MCF 10A (cell line): ENCODE measurements at regions of chr1 and their contacts with region 1.

Region 1: GRCh38 chr1:167442124-167442848 is 76.0 kb downstream of the CD247 start:
- DNase-seq: peak; percentile 94
- H3K4me3 Mint-ChIP-seq: no peak overlapping the region
- H3K27ac Mint-ChIP-seq: no peak overlapping the region
- H3K4me1 Mint-ChIP-seq: peaks cover 6% of the 10 kb centered on the region
- H3K27me3 Mint-ChIP-seq: peaks cover 18% of the 10 kb centered on the region
- CTCF ChIP-seq: peak; percentile 98

Region 2: DNA sequence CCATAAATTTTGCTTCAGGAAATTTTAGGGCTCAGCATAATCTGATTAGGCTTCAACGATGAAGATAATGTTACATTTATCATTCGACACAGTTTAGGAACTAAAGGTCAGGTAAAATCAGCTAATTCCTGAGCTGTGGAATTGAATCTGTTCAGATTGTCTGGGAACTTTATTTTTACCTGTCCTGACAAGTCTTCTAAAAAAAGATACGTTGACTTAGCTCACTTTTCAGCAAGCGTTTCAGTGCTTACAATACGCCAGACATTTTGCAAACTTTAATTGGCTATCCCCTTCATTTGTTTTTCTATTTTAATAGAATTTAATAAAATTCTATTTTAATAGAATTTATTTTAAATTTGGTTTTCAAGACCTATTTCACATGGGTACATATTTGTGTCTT is 163.8 kb before region 1 on chr1:
- CTCF ChIA-PET with region 1: interaction called, 19 read pairs
- POLR2A ChIA-PET with region 1: no interaction called
- intact Hi-C with region 1: no loop called
- DNase-seq: no peak
- H3K4me3 Mint-ChIP-seq: no peak overlapping the region
- H3K27ac Mint-ChIP-seq: no peak overlapping the region
- H3K4me1 Mint-ChIP-seq: peaks cover 17% of the 10 kb centered on the region
- H3K27me3 Mint-ChIP-seq: no peaks in the 10 kb centered on the region
- CTCF ChIP-seq: no peak

Region 3: GRCh38 chr1:167401260-167401873 is 40.9 kb before region 1 on chr1:
- CTCF ChIA-PET with region 1: interaction called, 49 read pairs
- POLR2A ChIA-PET with region 1: interaction called, 3 read pairs
- intact Hi-C with region 1: loop called (anchors 1 kb)
- DNase-seq: peak; percentile 76
- H3K4me3 Mint-ChIP-seq: no peak overlapping the region
- H3K27ac Mint-ChIP-seq: peak overlapping the region; percentile 23
- H3K4me1 Mint-ChIP-seq: peaks cover 6% of the 10 kb centered on the region
- H3K27me3 Mint-ChIP-seq: no peaks in the 10 kb centered on the region
- CTCF ChIP-seq: peak; percentile 72

Region 4: DNA sequence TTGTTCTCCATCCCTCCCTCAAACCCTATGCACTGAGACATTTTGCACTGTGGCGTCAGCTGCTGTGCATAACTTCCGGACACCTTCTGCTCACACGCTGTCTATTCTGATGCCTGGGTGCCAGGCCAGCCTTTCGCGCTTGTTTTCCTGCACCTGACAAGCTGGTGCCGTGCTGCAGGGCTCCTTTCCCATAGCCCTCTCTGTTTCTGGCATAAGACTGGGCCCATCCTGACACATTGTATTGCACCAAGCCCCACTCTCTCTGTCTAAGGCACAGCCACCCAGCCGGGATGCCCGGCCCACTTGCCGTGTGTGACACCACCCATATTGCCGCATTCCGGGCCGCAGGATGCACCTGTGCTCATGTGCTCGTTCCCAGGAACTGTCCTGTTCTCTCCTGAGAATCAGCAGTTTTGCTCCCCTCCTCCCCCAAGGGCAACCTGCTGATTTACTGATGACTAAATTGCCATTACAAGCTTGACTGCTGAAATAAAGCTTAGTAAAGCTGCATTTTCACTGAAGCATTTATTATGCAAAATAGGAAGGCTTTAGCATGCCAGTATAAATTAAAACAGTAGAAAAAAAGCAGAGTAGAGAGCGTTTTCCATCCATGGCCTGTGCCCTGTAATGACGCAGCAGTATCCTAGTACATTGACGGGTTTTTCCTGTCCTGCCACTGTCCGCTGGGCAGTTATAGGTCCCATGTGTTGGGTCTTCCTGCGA is 12.0 kb before region 1 on chr1:
- CTCF ChIA-PET with region 1: interaction called, 105 read pairs
- POLR2A ChIA-PET with region 1: no interaction called
- intact Hi-C with region 1: no loop called
- DNase-seq: no peak
- H3K4me3 Mint-ChIP-seq: no peak overlapping the region
- H3K27ac Mint-ChIP-seq: no peak overlapping the region
- H3K4me1 Mint-ChIP-seq: no peaks in the 10 kb centered on the region
- H3K27me3 Mint-ChIP-seq: no peaks in the 10 kb centered on the region
- CTCF ChIP-seq: no peak

Region 5: DNA sequence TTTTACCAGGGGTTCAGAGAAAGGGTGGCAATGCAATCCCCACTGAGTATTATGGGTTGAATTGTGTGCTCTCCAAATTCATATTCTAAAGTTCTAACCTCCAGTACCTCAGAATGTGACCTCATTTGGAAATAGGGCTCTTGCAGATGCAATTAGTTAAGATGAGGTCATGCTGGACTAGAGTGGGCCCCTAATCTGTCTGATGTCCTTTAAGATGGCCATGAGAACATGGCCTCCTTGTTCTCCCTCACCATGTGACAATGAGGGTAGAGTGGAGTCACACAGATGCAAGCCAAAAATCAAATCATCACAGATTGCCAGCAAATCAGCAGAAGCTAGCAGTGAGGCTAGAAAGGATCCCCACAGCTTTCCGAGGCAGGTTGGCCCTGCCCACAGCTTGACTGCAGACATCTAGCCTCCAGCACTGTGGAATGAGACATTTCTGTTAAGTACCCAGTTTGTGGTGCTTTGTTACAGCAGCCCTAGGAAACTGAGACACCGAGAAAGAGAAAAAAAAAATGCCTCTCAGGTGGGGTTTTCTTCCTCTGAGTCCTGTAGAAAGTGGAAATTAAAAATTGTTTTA is 136.7 kb after region 1 on chr1:
- CTCF ChIA-PET with region 1: no interaction called
- POLR2A ChIA-PET with region 1: no interaction called
- intact Hi-C with region 1: no loop called
- DNase-seq: no peak
- H3K4me3 Mint-ChIP-seq: no peak overlapping the region
- H3K27ac Mint-ChIP-seq: no peak overlapping the region
- H3K4me1 Mint-ChIP-seq: peaks cover 7% of the 10 kb centered on the region
- H3K27me3 Mint-ChIP-seq: no peaks in the 10 kb centered on the region
- CTCF ChIP-seq: no peak

Region 6: DNA sequence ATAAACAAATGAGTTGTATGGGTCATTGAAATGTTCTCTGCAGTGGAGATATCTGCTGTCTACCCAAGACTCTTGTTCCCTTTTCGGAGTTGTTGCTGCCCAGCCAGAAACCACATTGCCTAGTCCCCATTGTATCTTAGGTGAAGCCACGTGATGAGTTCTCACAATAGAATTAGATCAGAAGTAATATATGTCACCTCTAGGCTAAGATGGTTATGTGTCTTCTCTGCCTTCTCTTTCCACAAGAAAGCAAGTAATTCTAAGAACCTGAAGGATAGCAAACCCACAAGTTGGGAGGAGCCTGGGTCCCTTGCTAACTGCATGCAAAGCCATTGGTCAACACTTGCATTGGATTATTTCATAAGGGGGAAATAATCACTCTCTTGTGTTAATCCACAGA is 395.0 kb after region 1 on chr1:
- CTCF ChIA-PET with region 1: no interaction called
- POLR2A ChIA-PET with region 1: no interaction called
- intact Hi-C with region 1: no loop called
- DNase-seq: no peak
- H3K4me3 Mint-ChIP-seq: no peak overlapping the region
- H3K27ac Mint-ChIP-seq: no peak overlapping the region
- H3K4me1 Mint-ChIP-seq: no peaks in the 10 kb centered on the region
- H3K27me3 Mint-ChIP-seq: no peaks in the 10 kb centered on the region
- CTCF ChIP-seq: no peak